Activated T-helper 2 cell treated with anti-CD3 and anti-CD28 coated beads, Interferon-gamma antibody, Interleukin-2, Interleukin-4, amounts not matched to agents 10 μg/mL and 5 μg/mL and 100 μg/mL, durations not matched to agents 14 hours and 24 hours and 36 hours (primary cell): ENCODE measurements at regions of chr18 and their contacts with region 1.

Region 1: DNA sequence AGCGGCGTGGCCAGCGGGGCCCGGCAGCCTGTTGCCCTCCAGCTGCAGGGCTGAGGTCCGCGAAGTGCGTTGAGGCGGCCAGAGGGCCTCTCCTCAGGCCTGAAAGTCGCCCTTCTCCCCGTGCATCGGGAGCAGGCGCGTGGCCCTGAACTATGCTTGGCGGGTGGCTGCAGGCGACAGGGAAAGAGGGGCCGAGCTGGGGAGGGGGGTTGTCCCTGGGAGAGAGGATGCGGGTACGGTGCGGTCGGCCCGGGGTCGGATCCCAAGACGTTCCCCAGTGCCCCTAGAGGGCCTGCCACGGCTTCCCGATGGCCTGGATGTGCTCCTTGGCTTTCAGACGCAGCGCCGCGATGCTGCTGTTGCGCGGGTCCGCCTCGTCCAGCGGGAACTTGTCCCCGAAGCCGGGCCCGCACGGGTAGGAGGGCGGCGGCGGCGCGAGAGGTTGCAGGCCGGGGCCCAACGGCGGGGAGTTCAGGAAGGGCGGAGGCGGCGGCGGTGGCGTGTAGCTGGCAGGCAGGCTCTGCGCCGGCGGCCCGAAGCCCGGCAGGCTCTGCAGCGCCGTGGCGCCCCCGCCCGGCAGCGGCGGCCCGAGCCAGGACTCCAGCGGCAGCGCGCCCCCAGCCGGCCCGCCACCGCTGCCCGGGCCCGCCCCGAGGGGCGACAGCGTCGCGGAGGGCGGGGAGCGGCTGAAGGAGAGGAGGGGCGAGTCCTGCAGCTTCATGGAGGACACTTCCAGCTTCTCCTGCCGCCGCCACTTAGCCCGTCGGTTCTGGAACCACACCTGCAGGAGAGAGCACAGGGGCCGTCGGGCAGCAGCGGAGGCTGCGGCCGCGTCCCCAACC is 4.3 kb downstream of the RAX start:
- DNase-seq: peak; percentile 40
- H3K4me3 Mint-ChIP-seq: peak overlapping the region; percentile 37
- H3K27ac Mint-ChIP-seq: no peak overlapping the region
- H3K4me1 Mint-ChIP-seq: peaks cover 16% of the 10 kb centered on the region
- H3K27me3 Mint-ChIP-seq: peaks cover 77% of the 10 kb centered on the region

Region 2: GRCh38 chr18:59085797-59086196 is 183.1 kb before region 1 on chr18:
- intact Hi-C with region 1: loop called (anchors 1 kb)
- DNase-seq: no peak
- H3K4me3 Mint-ChIP-seq: no peak overlapping the region
- H3K27ac Mint-ChIP-seq: no peak overlapping the region
- H3K4me1 Mint-ChIP-seq: peaks cover 6% of the 10 kb centered on the region
- H3K27me3 Mint-ChIP-seq: peaks cover 16% of the 10 kb centered on the region

Region 3: DNA sequence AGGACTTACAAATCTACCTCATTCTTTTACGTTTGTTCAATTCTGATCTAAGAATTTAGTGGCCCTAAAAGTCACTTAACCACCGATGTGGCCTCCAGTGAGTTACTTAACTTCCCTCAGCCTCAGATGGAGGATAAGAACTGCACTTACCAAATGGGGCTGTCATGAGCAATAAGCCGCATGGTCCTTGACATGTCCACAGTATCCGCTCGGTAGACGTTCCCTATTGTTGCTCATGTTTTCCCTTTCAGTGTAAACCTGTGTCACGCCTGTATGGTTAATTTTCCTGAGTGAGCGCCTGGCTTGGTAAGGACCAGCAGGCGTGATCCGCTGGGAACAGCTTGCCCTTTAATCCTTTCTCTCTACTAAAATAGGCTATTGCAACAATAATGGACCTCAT is 109.0 kb before region 1 on chr18:
- intact Hi-C with region 1: no loop called
- DNase-seq: no peak
- H3K4me3 Mint-ChIP-seq: no peak overlapping the region
- H3K27ac Mint-ChIP-seq: no peak overlapping the region
- H3K4me1 Mint-ChIP-seq: no peaks in the 10 kb centered on the region
- H3K27me3 Mint-ChIP-seq: no peaks in the 10 kb centered on the region

Region 4: DNA sequence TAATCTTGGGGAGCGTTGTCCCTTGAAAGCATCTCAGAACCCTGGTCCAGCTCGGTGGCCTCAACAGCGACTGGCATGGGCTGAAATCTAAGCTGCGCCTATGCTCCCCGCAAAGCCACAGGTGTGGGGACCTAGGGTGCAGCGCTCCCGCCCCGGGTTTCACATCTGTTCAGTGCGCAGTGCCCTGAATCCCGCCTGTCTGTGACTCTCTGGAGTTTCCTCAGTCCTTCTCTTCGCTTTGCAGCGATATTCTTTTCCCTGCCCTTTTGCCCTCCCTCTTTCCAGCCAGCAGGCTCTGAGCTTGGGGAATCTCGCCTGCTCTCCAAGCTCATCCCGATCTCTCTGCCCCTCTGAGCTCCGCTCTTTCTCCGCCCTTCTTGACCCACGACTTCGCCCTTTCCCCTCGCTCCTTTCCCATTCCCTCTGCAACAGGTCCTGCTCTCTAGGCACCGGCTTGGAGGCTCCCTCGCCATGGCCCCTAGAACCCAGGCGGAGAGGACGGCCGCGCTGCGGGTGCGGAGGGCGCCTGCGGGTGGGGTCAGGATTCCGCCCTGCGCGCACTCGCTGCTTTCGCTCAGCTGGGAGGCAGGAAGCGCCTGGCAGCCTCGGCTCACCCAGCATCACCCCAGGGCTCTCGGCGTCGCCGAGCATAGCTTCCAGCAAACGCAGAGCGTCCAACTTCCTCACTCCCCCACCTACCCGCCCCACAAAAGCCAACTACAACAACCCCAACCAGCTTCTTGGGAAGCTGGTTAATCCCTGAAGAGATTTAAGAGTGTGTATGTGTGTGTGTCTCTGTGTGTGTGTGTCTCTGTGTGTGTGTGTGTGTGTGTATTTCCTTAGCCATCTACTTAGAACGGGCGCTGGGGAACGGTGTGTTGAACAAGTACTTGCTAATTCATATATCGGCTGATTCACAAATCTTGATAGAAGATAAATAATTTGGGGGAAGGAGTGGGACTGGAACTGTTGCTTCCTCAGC is 47.9 kb before region 1 on chr18:
- intact Hi-C with region 1: loop called (anchors 1 kb)
- DNase-seq: no peak
- H3K4me3 Mint-ChIP-seq: no peak overlapping the region
- H3K27ac Mint-ChIP-seq: no peak overlapping the region
- H3K4me1 Mint-ChIP-seq: no peaks in the 10 kb centered on the region
- H3K27me3 Mint-ChIP-seq: peaks cover 75% of the 10 kb centered on the region

Region 5: DNA sequence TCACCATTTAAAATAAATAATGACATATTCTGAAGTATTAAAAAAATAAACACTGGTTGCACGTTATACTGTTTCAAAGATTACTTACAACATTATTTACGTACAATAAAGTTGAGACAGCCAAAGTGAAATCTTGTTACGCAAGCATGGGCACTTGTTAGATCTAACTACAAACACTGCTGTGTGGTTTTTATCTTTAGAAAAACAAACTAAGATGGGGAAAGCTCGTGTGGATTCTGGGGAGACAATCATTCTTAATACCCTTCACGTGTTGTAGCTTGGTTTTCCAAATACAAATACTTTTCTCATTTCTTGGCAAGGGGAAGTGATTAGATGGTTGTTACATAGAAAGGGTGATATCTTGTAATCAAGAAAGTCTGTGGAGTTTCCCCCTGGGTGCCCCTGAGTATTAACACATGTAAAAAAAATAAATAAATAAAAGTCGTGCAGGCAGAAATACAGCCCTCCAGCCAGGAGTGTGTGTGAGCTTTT is 215.9 kb after region 1 on chr18:
- intact Hi-C with region 1: no loop called
- DNase-seq: no peak
- H3K4me3 Mint-ChIP-seq: no peak overlapping the region
- H3K27ac Mint-ChIP-seq: no peak overlapping the region
- H3K4me1 Mint-ChIP-seq: no peaks in the 10 kb centered on the region
- H3K27me3 Mint-ChIP-seq: no peaks in the 10 kb centered on the region

Region 6: GRCh38 chr18:59593291-59593717 is 324.4 kb after region 1 on chr18:
- intact Hi-C with region 1: no loop called
- DNase-seq: no peak
- H3K4me3 Mint-ChIP-seq: no peak overlapping the region
- H3K27ac Mint-ChIP-seq: no peak overlapping the region
- H3K4me1 Mint-ChIP-seq: no peaks in the 10 kb centered on the region
- H3K27me3 Mint-ChIP-seq: no peaks in the 10 kb centered on the region

Region 7: DNA sequence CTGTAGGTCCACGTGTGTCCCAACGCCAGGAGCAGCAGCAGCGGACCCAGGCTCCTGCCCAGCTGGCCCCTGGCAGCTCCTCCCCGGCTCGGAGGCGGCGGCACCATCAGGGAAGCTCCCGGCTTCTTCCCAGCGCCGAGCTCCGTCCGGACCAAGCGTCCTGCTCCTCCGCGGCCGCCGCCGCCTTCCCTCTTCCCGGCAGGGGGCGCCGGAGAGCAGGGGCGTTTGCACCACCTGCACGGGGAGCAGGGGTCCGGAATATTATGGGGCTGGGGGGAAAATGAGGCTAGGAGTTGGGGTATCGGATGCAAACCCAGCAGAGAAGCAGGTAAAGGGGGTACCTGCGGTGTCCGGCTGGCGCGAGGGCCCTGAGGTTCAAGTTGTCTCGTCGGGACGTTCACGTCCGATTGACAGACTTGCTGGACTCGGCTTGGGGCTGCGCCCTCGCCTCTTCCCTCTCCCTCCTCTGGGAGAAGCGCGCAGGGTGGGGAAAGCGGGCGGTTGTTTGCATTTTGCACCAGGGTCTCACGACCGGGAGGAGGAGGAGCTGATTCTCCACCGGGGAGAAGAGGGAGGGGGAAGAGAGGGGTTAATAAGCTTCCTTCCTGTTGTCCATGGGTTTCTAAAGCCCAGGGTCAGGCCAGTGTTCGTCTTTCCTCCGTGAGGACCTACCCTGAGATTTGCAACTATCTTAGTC is 428.4 kb after region 1 on chr18 and contains the start of gene CCBE1:
- intact Hi-C with region 1: loop called (anchors 5 kb)
- DNase-seq: peak; percentile 23
- H3K4me3 Mint-ChIP-seq: no peak within 1 kb of the TSS
- H3K27ac Mint-ChIP-seq: no peak within 1 kb of the TSS
- H3K4me1 Mint-ChIP-seq: peaks cover 4% of the 10 kb centered on the region
- H3K27me3 Mint-ChIP-seq: peaks cover 62% of the 10 kb centered on the region
- total RNA-seq, gene CCBE1: not detected in 2 replicates